K562 (cell line): ENCODE measurements at regions of chr9 and their contacts with region 1.

Region 1: GRCh38 chr9:96317335-96317980 is 15.5 kb upstream of the HSD17B3 start:
- DNase-seq: peak; percentile 68 to 72 (median 68)
- ATAC-seq: peak; percentile 85
- H3K4me3 ChIP-seq: no peak overlapping the region
- H3K27ac ChIP-seq: no peak overlapping the region
- H3K4me1 ChIP-seq: no peaks in the 10 kb centered on the region
- H3K27me3 ChIP-seq: peaks cover 0 to 7% of the 10 kb centered on the region in 2 experiments; a peak in 2 of 5 replicates
- CTCF ChIP-seq: peak; percentile 85 to 96 (median 88)
- EP300 ChIP-seq: no peak
- POLR2A ChIP-seq: no peak
- RAD21 ChIP-seq: peak; percentile 91 to 94

Region 2: DNA sequence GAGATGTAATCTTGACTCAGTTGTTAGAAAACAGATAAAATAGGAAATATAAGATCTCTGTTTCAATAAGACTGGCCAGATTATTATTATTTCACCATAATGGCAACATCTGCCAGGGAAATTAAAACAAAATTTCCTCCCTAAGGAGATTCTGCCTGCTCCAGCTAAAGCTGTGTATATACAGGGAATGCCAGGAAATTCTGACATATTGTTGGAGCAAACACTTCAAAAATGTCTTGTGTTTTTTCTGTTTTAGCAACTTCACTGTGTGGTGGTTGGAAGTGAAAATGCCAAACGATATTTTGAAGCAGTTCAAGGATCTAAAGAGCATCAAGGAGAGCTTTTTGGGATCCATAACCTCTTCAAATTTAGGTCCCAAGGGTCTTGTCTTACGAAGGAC is 351.2 kb before region 1 on chr9:
- CTCF ChIA-PET with region 1: no interaction called
- POLR2A ChIA-PET with region 1: no interaction called
- in situ Hi-C with region 1: no loop called
- intact Hi-C with region 1: no loop called
- DNase-seq: no peak
- ATAC-seq: no peak
- H3K4me3 ChIP-seq: no peak overlapping the region
- H3K27ac ChIP-seq: no peak overlapping the region
- H3K4me1 ChIP-seq: no peaks in the 10 kb centered on the region
- H3K27me3 ChIP-seq: no peaks in the 10 kb centered on the region
- CTCF ChIP-seq: no peak
- EP300 ChIP-seq: no peak
- POLR2A ChIP-seq: no peak
- RAD21 ChIP-seq: no peak

Region 3: GRCh38 chr9:96061293-96061987 is 256.0 kb before region 1 on chr9:
- CTCF ChIA-PET with region 1: no interaction called
- POLR2A ChIA-PET with region 1: no interaction called
- in situ Hi-C with region 1: no loop called
- intact Hi-C with region 1: loop called (anchors 5 kb)
- DNase-seq: peak; percentile 40 to 54 (median 44)
- ATAC-seq: peak; percentile 83
- H3K4me3 ChIP-seq: no peak overlapping the region
- H3K27ac ChIP-seq: no peak overlapping the region
- H3K4me1 ChIP-seq: no peaks in the 10 kb centered on the region
- H3K27me3 ChIP-seq: peaks cover 5 to 22% of the 10 kb centered on the region in 2 experiments; a peak in 3 of 5 replicates
- CTCF ChIP-seq: peak; percentile 57 to 68 (median 59); a peak in 5 of 6 replicates
- EP300 ChIP-seq: no peak
- POLR2A ChIP-seq: no peak
- RAD21 ChIP-seq: peak; percentile 57 to 78

Region 4: GRCh38 chr9:96232539-96233241 is 84.8 kb before region 1 on chr9:
- CTCF ChIA-PET with region 1: interaction called, 21 read pairs
- POLR2A ChIA-PET with region 1: no interaction called
- in situ Hi-C with region 1: loop called (anchors 5 kb)
- intact Hi-C with region 1: loop called (anchors 1 kb)
- DNase-seq: peak; percentile 32 to 62 (median 48)
- ATAC-seq: peak; percentile 93
- H3K4me3 ChIP-seq: no peak overlapping the region
- H3K27ac ChIP-seq: no peak overlapping the region
- H3K4me1 ChIP-seq: no peaks in the 10 kb centered on the region; a peak in 1 of 5 replicates
- H3K27me3 ChIP-seq: peaks cover 2 to 13% of the 10 kb centered on the region in 2 experiments; a peak in 3 of 5 replicates
- CTCF ChIP-seq: peak; percentile 75 to 88 (median 88)
- EP300 ChIP-seq: no peak
- POLR2A ChIP-seq: no peak
- RAD21 ChIP-seq: peak; percentile 53 to 81

Region 5: DNA sequence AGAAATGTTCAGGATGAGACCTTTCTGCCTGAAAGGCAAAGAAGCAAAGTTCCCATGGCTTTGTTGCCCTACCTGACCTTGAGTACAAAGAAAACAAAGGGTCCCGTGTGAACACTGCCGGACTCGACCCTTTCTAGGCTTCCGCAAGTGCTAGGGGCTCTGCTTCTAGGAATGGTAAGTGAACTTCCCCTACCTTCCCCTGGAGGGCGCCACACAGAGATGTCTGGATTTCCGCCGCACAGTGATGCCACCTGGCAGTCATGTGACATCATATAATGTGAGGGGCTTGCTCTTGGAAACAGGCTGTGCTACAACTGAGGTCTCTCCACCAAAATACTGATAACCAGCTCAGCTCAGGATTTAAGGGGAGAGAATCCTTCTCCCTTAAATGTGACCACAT is 72.1 kb before region 1 on chr9:
- CTCF ChIA-PET with region 1: no interaction called
- POLR2A ChIA-PET with region 1: no interaction called
- in situ Hi-C with region 1: no loop called
- intact Hi-C with region 1: loop called (anchors 5 kb)
- DNase-seq: no peak
- ATAC-seq: peak; percentile 59
- H3K4me3 ChIP-seq: no peak overlapping the region
- H3K27ac ChIP-seq: no peak overlapping the region
- H3K4me1 ChIP-seq: peaks cover 3 to 7% of the 10 kb centered on the region in 2 experiments; a peak in 2 of 5 replicates
- H3K27me3 ChIP-seq: peaks cover 7 to 19% of the 10 kb centered on the region in 2 experiments; a peak in 3 of 5 replicates
- CTCF ChIP-seq: peak; percentile 43 to 59 (median 52)
- EP300 ChIP-seq: no peak
- POLR2A ChIP-seq: no peak
- RAD21 ChIP-seq: peak in 1 of 2 experiments; percentile 16; a peak in 2 of 4 replicates

Region 6: DNA sequence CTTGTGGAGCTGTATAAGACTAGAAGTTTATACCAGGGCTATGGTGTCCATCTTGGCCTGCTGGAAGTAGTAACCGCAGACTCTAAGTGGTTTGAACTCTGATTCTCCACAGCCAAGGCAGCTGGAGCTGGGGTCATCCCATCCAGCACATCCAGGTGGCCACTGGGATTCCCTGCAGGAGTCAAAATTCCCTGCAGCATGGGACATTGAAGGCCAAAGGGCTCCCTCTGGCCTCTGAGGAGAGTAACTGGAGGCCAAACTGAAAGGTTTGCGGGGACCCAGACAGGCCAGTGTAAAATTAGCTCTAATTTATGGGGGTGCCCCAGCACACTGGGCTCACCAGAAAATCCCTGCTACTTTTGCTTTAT is 349.9 kb after region 1 on chr9:
- CTCF ChIA-PET with region 1: no interaction called
- POLR2A ChIA-PET with region 1: no interaction called
- in situ Hi-C with region 1: no loop called
- intact Hi-C with region 1: loop called (anchors 5 kb)
- DNase-seq: no peak
- ATAC-seq: no peak
- H3K4me3 ChIP-seq: no peak overlapping the region
- H3K27ac ChIP-seq: no peak overlapping the region
- H3K4me1 ChIP-seq: peaks cover 0 to 4% of the 10 kb centered on the region in 2 experiments; a peak in 1 of 5 replicates
- H3K27me3 ChIP-seq: no peaks in the 10 kb centered on the region
- CTCF ChIP-seq: no peak
- EP300 ChIP-seq: no peak
- POLR2A ChIP-seq: no peak
- RAD21 ChIP-seq: no peak